Body of pancreas (tissue), 4 donors: ENCODE measurements at regions of chr6 and their contacts with region 1.

Region 1: GRCh38 chr6:146857180-146857979 is 258.6 kb downstream of the ADGB start:
- DNase-seq: peak; percentile 83 to 86 (median 84)
- ATAC-seq: peak; percentile 93
- H3K4me3 ChIP-seq: no peak overlapping the region
- H3K27ac ChIP-seq: peak overlapping the region in 2 of 4 donors; percentile 31 to 41
- H3K4me1 ChIP-seq: peaks cover 5% of the 10 kb centered on the region
- H3K27me3 ChIP-seq: no peaks in the 10 kb centered on the region
- CTCF ChIP-seq: peak; percentile 96 to 98 (median 97)
- POLR2A ChIP-seq: no peak

Region 2: DNA sequence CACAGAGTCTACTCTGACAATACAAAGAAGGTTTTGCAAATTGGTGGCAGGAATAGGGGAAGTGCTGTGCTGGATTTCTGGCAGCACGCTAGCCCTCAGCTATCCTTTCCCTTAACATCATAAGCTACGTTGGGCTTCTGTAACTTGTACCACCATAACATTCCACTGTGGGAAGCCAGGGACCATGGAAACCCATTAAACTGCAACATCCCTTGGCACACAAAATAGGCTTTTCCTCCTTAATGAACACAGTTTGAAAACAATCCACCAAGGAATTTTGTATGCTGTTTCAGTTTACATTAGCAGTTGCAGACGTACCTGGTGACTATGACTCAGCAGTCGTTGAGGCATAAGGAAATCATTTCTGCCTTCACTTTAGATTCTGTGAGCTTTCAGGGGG is 517.7 kb before region 1 on chr6:
- intact Hi-C with region 1: no loop called
- DNase-seq: no peak
- ATAC-seq: no peak
- H3K4me3 ChIP-seq: no peak overlapping the region
- H3K27ac ChIP-seq: no peak overlapping the region
- H3K4me1 ChIP-seq: no peaks in the 10 kb centered on the region
- H3K27me3 ChIP-seq: no peaks in the 10 kb centered on the region
- CTCF ChIP-seq: no peak
- POLR2A ChIP-seq: no peak

Region 3: GRCh38 chr6:147063469-147064031 is 206.2 kb after region 1 on chr6:
- intact Hi-C with region 1: no loop called
- DNase-seq: no peak
- ATAC-seq: peak; percentile 77
- H3K4me3 ChIP-seq: no peak overlapping the region
- H3K27ac ChIP-seq: peak overlapping the region in 2 of 4 donors; percentile 1 to 15
- H3K4me1 ChIP-seq: peaks cover 9% of the 10 kb centered on the region
- H3K27me3 ChIP-seq: no peaks in the 10 kb centered on the region
- CTCF ChIP-seq: no peak
- POLR2A ChIP-seq: no peak

Region 4: GRCh38 chr6:147202516-147203312 is 345.3 kb after region 1 on chr6:
- intact Hi-C with region 1: loop called (anchors 10 kb)
- DNase-seq: peak; percentile 84 to 95 (median 88)
- ATAC-seq: peak; percentile 84
- H3K4me3 ChIP-seq: peak overlapping the region; percentile 20 to 30
- H3K27ac ChIP-seq: peak overlapping the region; percentile 88 to 98 (median 95)
- H3K4me1 ChIP-seq: peaks cover 14% of the 10 kb centered on the region
- H3K27me3 ChIP-seq: no peaks in the 10 kb centered on the region
- CTCF ChIP-seq: no peak
- POLR2A ChIP-seq: peak; percentile 71 to 97 (median 97)